ENCODE measurements at regions of chr3 and their contacts with region 1.

Region 1: DNA sequence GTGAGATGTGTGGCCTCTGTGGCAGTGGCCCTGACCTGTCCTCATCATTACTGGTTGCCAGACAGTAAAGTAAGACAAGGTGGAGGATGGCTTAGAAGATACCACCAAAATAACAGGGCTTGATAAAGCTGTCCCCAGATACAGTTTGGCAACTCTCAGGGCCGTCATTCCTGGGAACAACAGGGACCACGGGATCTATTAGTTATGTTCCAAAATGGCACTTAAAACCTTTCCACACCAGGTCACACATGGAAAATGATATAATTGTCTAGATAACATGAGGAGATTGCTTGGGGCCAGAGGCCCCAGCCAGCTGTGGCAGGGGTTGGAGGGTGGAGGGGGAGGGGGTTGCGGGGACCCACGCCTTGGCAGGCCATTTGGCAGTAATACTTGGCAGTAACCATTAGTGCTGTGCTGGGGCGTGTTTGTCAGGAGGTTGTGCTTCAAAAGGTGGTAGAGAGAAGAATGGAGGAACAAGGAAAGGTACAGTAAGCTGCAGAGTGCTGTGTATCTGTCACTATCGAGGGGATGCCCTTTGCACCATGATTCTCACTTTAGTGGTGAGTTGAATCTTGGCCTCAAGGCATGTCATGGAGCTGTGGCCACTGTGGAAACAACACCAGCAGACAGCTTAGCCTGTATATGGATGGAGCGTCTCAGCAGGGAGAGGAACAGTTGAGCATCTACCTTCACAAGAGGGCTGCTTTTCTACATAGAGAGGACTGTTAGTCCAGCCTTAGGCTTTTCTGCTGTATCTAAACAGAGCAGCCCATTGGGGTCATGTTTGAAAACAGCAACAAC is 14.0 kb downstream of the PLCL2 start:
- DNase-seq: no peak
- ATAC-seq: peak in 1 of 2 donors; percentile 16
- H3K4me3 Mint-ChIP-seq: peak overlapping the region; percentile 9 to 84 (median 74)
- H3K27ac Mint-ChIP-seq: peak overlapping the region; percentile 78 to 96 (median 92)
- H3K4me1 Mint-ChIP-seq: peaks cover 57 to 93% (median 88%) of the 10 kb centered on the region in 4 donors
- H3K27me3 Mint-ChIP-seq: no peaks in the 10 kb centered on the region

Region 2: DNA sequence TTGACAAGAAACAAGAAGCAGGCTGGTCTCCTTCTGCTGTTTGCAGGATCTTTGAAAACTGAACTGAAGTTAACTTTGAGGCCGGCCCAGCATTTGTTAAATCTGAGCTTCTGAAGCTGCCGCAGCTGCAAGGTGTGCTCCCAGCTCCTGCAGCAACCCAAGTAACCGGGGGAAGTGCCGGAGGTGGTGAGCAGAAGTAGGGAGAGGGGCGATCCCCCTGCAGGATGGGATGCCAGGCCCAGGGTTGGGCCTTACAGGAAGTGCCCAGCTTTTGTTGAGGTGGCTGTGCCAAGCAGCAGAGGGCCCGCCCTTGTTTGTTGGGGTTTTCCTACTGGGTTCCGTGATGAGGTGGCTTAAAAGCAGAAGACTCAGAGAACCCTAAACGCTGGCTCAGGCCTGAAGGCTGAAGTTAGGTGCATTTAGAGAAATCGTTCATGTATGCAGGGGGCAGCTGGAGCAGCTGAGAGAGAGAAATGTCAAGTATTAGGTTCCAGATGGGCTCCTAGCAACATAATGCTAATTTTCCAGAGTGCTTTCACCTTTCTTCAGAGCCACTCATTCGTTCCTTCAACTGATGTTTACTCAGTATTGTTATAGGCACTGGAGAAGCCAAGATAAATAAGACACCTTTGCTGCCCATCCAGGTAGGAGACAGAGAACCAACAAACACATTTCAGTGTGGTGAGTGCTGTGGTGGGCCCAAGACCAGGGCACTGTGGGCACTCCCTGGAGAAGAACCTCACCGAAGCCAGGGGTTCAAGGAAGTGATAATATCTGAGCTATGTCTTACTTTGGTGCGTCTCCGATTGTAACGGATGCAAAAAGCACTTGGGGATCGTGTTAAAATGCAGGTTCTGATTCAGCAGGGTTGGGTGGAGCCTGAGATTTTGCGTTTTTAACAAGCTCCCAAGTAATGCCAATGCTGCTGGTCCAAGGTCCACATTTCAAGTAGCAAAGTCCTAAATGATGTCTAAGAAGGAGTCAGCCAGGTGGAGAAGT is 56.2 kb before region 1 on chr3:
- POLR2A ChIA-PET with region 1: interaction called, 17 read pairs
- DNase-seq: peak; percentile 52 to 83 (median 72)
- ATAC-seq: peak; percentile 89 to 92
- H3K4me3 Mint-ChIP-seq: peak overlapping the region; percentile 77 to 93 (median 87)
- H3K27ac Mint-ChIP-seq: peak overlapping the region; percentile 95 to 99 (median 98)
- H3K4me1 Mint-ChIP-seq: peaks cover 32 to 88% (median 83%) of the 10 kb centered on the region in 4 donors
- H3K27me3 Mint-ChIP-seq: no peaks in the 10 kb centered on the region

Region 3: DNA sequence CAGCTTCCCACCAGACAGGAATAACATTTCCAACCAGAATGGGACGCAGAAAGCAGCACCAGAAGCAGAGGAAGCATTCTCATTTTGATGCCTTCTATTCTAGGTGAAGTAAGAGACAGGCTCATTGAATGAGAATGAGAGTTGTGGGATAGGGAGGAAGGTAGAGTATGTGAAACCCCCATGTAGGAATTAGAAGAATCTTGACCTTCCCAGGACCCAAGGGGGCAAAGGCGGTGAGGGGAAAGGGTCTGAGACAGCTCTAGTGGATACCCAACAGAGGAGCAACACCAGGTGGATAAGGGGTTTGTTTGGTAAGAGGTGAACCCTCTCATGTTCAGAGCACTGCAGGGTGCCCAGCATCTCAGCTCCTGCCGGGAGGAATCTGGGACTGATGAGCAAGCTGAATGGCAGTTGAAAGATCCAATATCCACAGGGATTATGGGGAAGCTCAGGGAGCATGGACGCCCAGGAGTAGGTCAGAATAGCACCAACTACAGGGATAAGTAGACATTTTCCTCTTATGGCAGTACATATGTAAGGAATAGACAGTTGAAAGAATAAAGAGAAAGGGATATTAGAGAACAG is 62.9 kb after region 1 on chr3:
- POLR2A ChIA-PET with region 1: no interaction called
- DNase-seq: peak in 1 of 10 donors; percentile 37
- ATAC-seq: no peak
- H3K4me3 Mint-ChIP-seq: no peak overlapping the region
- H3K27ac Mint-ChIP-seq: peak overlapping the region; percentile 3 to 61 (median 34)
- H3K4me1 Mint-ChIP-seq: peaks cover 27 to 56% (median 45%) of the 10 kb centered on the region in 4 donors
- H3K27me3 Mint-ChIP-seq: no peaks in the 10 kb centered on the region